K562 (cell line): ENCODE measurements at regions of chr17 and their contacts with region 1.

Region 1: GRCh38 chr17:67293251-67294203 is 48.5 kb upstream of the HELZ start:
- DNase-seq: peak; percentile 70 to 82 (median 73)
- ATAC-seq: peak; percentile 99
- H3K4me3 ChIP-seq: no peak overlapping the region
- H3K27ac ChIP-seq: no peak overlapping the region
- H3K4me1 ChIP-seq: peaks cover 0 to 8% of the 10 kb centered on the region in 2 experiments; a peak in 1 of 5 replicates
- H3K27me3 ChIP-seq: no peaks in the 10 kb centered on the region
- CTCF ChIP-seq: peak; percentile 80 to 86 (median 84)
- EP300 ChIP-seq: no peak
- POLR2A ChIP-seq: no peak
- RAD21 ChIP-seq: peak; percentile 54 to 81

Region 2: DNA sequence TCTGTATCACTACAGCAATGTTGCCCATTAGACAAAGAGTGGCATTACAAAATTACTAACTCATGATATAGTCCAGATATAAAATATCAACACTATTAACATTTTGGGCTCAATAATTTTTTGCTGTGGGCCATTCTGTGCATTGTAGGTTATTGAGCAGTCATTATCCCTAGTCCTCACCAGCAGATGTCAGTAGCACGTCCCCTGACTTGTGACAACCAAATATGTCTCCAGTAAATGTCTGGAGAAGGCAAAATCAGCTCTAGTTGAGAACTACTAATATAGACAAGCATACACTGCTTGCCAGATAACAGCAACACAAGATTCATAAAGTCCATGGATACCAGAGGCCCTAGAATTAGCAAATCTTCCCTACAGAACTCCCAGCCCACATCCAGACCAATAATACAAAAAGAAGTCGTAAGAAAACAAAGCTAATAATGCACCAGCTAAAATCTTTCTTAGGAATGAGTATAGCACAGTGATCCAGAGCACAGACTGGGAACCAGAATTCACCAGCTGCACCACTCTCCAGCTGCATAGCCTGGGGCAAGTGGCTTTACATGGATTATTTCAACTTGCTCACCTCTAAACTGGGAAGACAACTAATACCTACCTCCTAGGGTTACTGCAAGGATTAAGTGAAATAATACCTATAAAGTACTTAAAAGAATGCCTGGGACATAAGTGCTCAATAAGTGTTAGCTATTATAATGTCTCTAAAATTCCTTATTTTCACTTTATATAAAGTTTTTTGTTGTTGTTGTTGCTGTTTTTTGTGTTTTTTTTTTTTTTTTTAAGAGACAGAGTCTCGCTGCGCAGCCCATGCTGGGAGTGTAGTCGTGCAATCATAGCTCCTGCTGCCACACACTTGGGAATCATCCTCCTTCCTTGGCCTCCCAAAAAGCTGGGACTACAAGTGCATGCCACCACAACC is 72.2 kb before region 1 on chr17:
- CTCF ChIA-PET with region 1: interaction called, 3 read pairs
- POLR2A ChIA-PET with region 1: no interaction called
- in situ Hi-C with region 1: no loop called
- intact Hi-C with region 1: loop called (anchors 1 kb)
- DNase-seq: peak; percentile 29 to 67 (median 37)
- ATAC-seq: peak; percentile 72
- H3K4me3 ChIP-seq: no peak overlapping the region
- H3K27ac ChIP-seq: no peak overlapping the region
- H3K4me1 ChIP-seq: peaks cover 8 to 14% of the 10 kb centered on the region in 2 experiments; a peak in 4 of 5 replicates
- H3K27me3 ChIP-seq: no peaks in the 10 kb centered on the region
- CTCF ChIP-seq: peak; percentile 60 to 76 (median 63)
- EP300 ChIP-seq: no peak
- POLR2A ChIP-seq: no peak
- RAD21 ChIP-seq: peak in 1 of 2 experiments; percentile 66; a peak in 3 of 4 replicates